Activated CD8-positive, alpha-beta memory T cell treated with anti-CD3 and anti-CD28 coated beads, Interleukin-2, amount 10 ng/mL, durations not matched to agents 7 days and 5 days (primary cell): ENCODE measurements at regions of chr3 and their contacts with region 1.

Region 1: GRCh38 chr3:58305882-58306711 is at the starts of genes HTD2 and RPP14:
- DNase-seq: peak; percentile 99
- ATAC-seq: peak; percentile 91
- H3K4me3 Mint-ChIP-seq: peak within 1 kb of the TSS; percentile 98
- H3K27ac Mint-ChIP-seq: peak within 1 kb of the TSS; percentile 99
- H3K4me1 Mint-ChIP-seq: peaks cover 32% of the 10 kb centered on the region
- H3K27me3 Mint-ChIP-seq: peaks cover 13% of the 10 kb centered on the region
- total RNA-seq, gene HTD2: 6.9 to 7.4 TPM
- total RNA-seq, gene RPP14: 12.9 to 16.9 TPM

Region 2: GRCh38 chr3:57852896-57853295 is 453.2 kb before region 1 on chr3:
- CTCF ChIA-PET with region 1: no interaction called
- DNase-seq: no peak
- ATAC-seq: no peak
- H3K4me3 Mint-ChIP-seq: no peak overlapping the region
- H3K27ac Mint-ChIP-seq: no peak overlapping the region
- H3K4me1 Mint-ChIP-seq: no peaks in the 10 kb centered on the region
- H3K27me3 Mint-ChIP-seq: no peaks in the 10 kb centered on the region

Region 3: GRCh38 chr3:57910988-57911387 is 395.1 kb before region 1 on chr3:
- CTCF ChIA-PET with region 1: no interaction called
- DNase-seq: no peak
- ATAC-seq: no peak
- H3K4me3 Mint-ChIP-seq: no peak overlapping the region
- H3K27ac Mint-ChIP-seq: no peak overlapping the region
- H3K4me1 Mint-ChIP-seq: no peaks in the 10 kb centered on the region
- H3K27me3 Mint-ChIP-seq: no peaks in the 10 kb centered on the region

Region 4: GRCh38 chr3:58008140-58009025 is 297.7 kb before region 1 on chr3 and contains the start of gene FLNB:
- CTCF ChIA-PET with region 1: interaction called, 12 read pairs
- DNase-seq: peak; percentile 80
- ATAC-seq: peak; percentile 87
- H3K4me3 Mint-ChIP-seq: peak within 1 kb of the TSS; percentile 94
- H3K27ac Mint-ChIP-seq: peak within 1 kb of the TSS; percentile 84
- H3K4me1 Mint-ChIP-seq: peaks cover 24% of the 10 kb centered on the region
- H3K27me3 Mint-ChIP-seq: no peaks in the 10 kb centered on the region
- total RNA-seq, gene FLNB: 9.8 to 13.2 TPM

Region 5: DNA sequence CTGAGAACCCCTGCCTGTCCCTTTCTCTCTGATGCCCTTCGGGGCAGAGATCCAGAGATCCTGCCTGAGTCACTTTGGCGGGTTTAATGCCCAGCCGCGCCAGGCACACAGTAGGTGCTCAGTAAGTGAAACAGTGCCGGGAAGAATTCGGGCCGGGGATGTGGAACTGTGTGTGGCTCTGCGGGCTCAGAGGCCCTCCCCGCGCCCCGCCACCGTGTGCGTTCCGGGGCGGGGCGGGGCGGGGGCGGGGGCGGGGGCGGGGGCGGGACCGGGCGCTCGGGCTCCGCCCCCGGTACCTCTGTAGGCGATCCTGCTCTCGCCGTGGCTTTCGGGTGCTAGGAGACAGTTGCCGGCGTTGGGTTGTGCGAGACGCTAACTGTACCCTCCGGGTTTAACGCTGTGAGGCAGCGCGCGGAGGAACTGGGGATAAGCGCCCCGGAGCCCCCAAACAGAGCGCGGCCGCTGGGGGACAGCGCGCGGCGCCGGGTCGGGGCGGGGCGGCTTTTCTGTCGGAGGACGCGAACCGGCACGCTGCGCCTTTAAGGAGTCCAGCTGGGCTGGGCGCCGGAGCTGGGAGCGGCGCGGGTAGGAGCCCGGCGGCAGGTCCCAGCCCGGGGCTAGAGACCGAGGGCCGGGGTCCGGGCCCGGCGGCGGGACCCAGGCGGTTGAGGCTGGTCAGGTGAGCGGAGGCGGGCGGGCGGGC is 68.7 kb before region 1 on chr3 and contains the start of gene ABHD6:
- CTCF ChIA-PET with region 1: interaction called, 29 read pairs
- DNase-seq: peak; percentile 84
- ATAC-seq: peak; percentile 91
- H3K4me3 Mint-ChIP-seq: peak within 1 kb of the TSS; percentile 85
- H3K27ac Mint-ChIP-seq: peak within 1 kb of the TSS; percentile 81
- H3K4me1 Mint-ChIP-seq: peaks cover 16% of the 10 kb centered on the region
- H3K27me3 Mint-ChIP-seq: peaks cover 36% of the 10 kb centered on the region
- total RNA-seq, gene ABHD6: 5.0 to 7.3 TPM

Region 6: GRCh38 chr3:58332575-58333188 is 26.6 kb after region 1 on chr3 and contains the start of gene PXK:
- CTCF ChIA-PET with region 1: interaction called, 59 read pairs
- DNase-seq: peak; percentile 84
- ATAC-seq: peak; percentile 89
- H3K4me3 Mint-ChIP-seq: peak within 1 kb of the TSS; percentile 95
- H3K27ac Mint-ChIP-seq: peak within 1 kb of the TSS; percentile 95
- H3K4me1 Mint-ChIP-seq: peaks cover 33% of the 10 kb centered on the region
- H3K27me3 Mint-ChIP-seq: no peaks in the 10 kb centered on the region
- total RNA-seq, gene PXK: 61.7 to 64.7 TPM

Region 7: DNA sequence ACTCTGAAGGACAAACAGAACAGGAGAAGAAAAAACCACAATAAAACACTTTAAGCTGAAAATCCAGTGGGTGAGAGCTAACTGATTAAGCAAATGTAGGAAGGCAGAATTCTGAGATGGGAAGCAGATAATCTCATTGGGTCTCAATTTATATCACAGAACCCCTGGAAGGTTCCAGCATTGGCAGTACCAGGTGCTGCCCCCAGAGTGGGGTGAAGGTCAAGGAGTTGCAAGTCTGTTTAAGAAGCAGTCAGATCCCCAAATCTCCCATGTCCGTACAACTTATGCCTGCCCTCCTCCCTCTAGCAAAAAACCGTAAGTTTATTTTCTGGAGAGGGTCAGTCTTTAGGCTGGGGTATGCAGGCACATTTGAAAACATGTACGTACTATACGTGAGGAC is 71.7 kb after region 1 on chr3:
- CTCF ChIA-PET with region 1: no interaction called
- DNase-seq: no peak
- ATAC-seq: no peak
- H3K4me3 Mint-ChIP-seq: no peak overlapping the region
- H3K27ac Mint-ChIP-seq: no peak overlapping the region
- H3K4me1 Mint-ChIP-seq: no peaks in the 10 kb centered on the region
- H3K27me3 Mint-ChIP-seq: no peaks in the 10 kb centered on the region

Region 8: GRCh38 chr3:58419780-58420507 is 113.8 kb after region 1 on chr3:
- CTCF ChIA-PET with region 1: interaction called, 22 read pairs
- DNase-seq: no peak
- ATAC-seq: peak; percentile 47
- H3K4me3 Mint-ChIP-seq: no peak overlapping the region
- H3K27ac Mint-ChIP-seq: peak overlapping the region; percentile 56
- H3K4me1 Mint-ChIP-seq: peaks cover 24% of the 10 kb centered on the region
- H3K27me3 Mint-ChIP-seq: no peaks in the 10 kb centered on the region

Region 9: GRCh38 chr3:58491506-58492402 is 185.7 kb after region 1 on chr3 and contains the start of gene KCTD6:
- CTCF ChIA-PET with region 1: interaction called, 48 read pairs
- DNase-seq: peak; percentile 90
- ATAC-seq: peak; percentile 91
- H3K4me3 Mint-ChIP-seq: peak within 1 kb of the TSS; percentile 84
- H3K27ac Mint-ChIP-seq: peak within 1 kb of the TSS; percentile 81
- H3K4me1 Mint-ChIP-seq: peaks cover 33% of the 10 kb centered on the region
- H3K27me3 Mint-ChIP-seq: peaks cover 47% of the 10 kb centered on the region
- total RNA-seq, gene KCTD6: 6.4 to 7.0 TPM